ENCODE measurements at regions of chr17 and their contacts with region 1.

Region 1: DNA sequence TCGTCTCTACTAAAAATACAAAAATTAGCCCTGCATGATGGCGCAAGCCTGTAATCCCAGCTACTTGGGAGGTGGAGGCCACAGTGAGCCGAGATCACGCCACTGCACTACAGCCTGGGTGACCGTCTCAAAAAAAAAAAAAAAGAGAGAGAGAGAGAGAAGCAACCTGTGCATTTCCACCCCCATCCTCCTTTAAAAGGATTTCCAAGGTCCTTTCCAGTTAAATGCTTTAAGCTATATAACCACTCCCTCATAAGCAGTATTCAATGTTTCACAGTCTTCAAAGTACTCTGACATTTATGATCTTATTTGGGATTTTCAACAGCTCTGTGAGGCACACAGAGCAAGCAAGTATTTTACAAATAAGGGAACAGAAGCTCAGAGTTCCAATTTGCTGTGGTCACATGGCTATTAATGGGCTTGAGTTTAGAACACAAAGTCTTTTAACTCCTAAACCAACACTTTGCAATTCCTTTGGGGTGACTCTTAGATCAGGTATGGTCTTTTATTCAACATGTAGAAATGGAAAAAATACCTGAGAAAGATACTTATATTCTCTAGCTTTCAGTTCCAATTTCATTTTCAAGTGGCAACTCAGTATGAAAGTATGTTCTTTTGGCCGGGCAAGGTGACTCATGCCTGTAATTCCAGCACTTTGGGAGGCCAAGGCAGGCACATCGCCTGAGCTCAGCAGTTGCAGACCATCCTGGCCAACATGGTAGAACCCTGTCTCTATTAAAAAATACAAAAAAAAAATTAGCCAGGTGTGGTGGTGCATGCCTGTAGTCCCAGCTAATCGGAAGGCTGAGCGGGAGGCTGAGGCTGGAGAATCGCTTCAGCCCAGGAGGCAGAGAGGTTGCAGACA is 31.3 kb downstream of the SPOP start:
- DNase-seq: peak; percentile 60
- H3K4me3 Mint-ChIP-seq: no peak overlapping the region
- H3K27ac Mint-ChIP-seq: peak overlapping the region; percentile 25
- H3K4me1 Mint-ChIP-seq: peaks cover 31% of the 10 kb centered on the region
- H3K27me3 Mint-ChIP-seq: no peaks in the 10 kb centered on the region
- CTCF ChIP-seq: no peak

Region 2: DNA sequence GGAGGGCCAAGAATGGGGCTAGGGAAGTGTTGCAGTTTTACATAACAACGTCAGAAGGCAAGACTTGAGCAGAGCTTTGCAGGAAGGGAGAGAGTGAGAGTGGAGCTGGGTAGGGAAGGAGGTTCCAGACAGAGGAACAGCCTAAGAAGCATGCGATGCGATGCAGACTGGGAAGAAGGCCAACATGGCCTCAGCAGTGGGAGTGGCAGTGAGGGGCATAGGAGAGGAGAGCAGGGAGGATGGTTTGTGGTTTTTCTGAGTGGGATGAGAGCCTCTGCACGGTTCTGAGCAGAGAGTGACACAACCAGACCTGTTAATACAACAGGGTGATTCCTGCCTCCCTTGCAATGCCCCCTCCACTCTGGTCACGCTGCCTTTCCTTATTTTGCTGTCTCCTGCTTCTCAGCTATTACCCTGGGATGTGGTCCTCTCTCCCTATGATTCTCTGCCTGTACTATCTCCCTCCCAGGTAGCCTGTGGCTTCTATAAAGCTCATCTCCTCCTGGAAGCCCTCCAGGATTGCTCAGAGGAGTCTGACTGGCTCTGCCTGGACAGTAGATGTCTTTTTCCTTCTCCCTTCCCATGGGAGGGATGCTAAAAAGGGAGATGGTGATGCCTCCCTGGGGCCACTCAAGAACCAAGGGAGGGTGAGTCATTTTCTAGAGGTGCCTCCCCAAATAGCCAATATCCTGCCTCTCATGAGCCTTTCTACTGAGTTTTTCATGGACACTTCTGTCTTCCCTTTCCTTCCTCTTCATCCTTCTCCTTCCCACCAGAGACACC is 190.2 kb before region 1 on chr17:
- CTCF ChIA-PET with region 1: no interaction called
- intact Hi-C with region 1: no loop called
- DNase-seq: no peak
- H3K4me3 Mint-ChIP-seq: no peak overlapping the region
- H3K27ac Mint-ChIP-seq: no peak overlapping the region
- H3K4me1 Mint-ChIP-seq: peaks cover 8% of the 10 kb centered on the region
- H3K27me3 Mint-ChIP-seq: peaks cover 89% of the 10 kb centered on the region
- CTCF ChIP-seq: no peak

Region 3: DNA sequence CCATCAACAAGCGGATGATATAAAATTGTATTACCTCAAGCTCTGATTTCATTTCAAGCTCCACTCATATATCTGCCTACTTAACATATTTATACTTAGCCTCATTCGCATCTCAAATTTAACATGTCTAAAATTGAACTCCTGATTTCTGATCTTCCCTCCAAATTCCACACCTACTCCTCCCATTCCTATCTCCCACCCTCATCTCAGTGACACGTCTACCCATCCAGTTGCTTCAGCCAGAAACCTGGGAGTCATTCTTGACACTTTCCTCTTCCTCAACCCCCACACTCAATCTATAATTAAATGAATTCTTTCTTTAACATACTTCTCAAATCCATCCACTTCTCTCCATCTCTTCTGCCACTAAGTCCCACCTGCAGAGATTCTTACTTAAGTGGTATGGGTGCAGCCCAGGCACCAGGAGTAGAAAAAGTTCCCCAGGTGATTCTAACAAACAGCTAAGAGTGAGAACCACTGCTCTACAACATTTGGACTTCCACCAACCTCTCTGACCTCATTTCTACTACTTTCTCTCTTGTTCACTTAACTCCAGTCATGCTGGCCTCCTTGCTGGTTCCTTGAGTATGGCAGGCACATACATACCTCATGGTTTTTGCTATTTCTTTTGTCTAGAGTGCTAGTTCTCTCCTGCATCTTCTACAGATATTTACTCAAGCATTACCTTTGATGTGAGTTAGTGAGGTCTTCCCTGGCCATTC is 13.2 kb after region 1 on chr17:
- CTCF ChIA-PET with region 1: interaction called, 13 read pairs
- intact Hi-C with region 1: no loop called
- DNase-seq: no peak
- H3K4me3 Mint-ChIP-seq: no peak overlapping the region
- H3K27ac Mint-ChIP-seq: no peak overlapping the region
- H3K4me1 Mint-ChIP-seq: no peaks in the 10 kb centered on the region
- H3K27me3 Mint-ChIP-seq: no peaks in the 10 kb centered on the region
- CTCF ChIP-seq: no peak